ENCODE measurements at regions of chr1 and their contacts with region 1.

Region 1: GRCh38 chr1:45339789-45340570 is at the starts of genes MUTYH and TOE1:
- DNase-seq: peak; percentile 83 to 94 (median 88)
- ATAC-seq: peak; percentile 79
- H3K4me3 ChIP-seq: peak within 1 kb of the TSS; percentile 98
- H3K4me3 Mint-ChIP-seq: peak within 1 kb of the TSS; percentile 100
- H3K27ac ChIP-seq: peak within 1 kb of the TSS; percentile 98 to 100
- H3K27ac Mint-ChIP-seq: peak within 1 kb of the TSS; percentile 95
- H3K4me1 ChIP-seq: peaks cover 42% of the 10 kb centered on the region
- H3K4me1 Mint-ChIP-seq: peaks cover 58% of the 10 kb centered on the region
- H3K27me3 ChIP-seq: no peaks in the 10 kb centered on the region
- H3K27me3 Mint-ChIP-seq: no peaks in the 10 kb centered on the region
- CTCF ChIP-seq: no peak
- total RNA-seq, gene MUTYH: 57.9 to 67.4 TPM
- total RNA-seq, gene TOE1: 44.5 to 46.2 TPM

Region 2: GRCh38 chr1:44721485-44722361 is 618.3 kb before region 1 on chr1:
- CTCF ChIA-PET with region 1: no interaction called
- POLR2A ChIA-PET with region 1: interaction called, 23 read pairs
- intact Hi-C with region 1: no loop called
- DNase-seq: peak; percentile 16 to 93 (median 48)
- ATAC-seq: peak; percentile 75
- H3K4me3 ChIP-seq: peak overlapping the region; percentile 6
- H3K4me3 Mint-ChIP-seq: peak overlapping the region; percentile 84
- H3K27ac ChIP-seq: peak overlapping the region; percentile 30 to 76
- H3K27ac Mint-ChIP-seq: peak overlapping the region; percentile 90
- H3K4me1 ChIP-seq: peaks cover 77% of the 10 kb centered on the region
- H3K4me1 Mint-ChIP-seq: peaks cover 68% of the 10 kb centered on the region
- H3K27me3 ChIP-seq: no peaks in the 10 kb centered on the region
- H3K27me3 Mint-ChIP-seq: no peaks in the 10 kb centered on the region
- CTCF ChIP-seq: no peak

Region 3: DNA sequence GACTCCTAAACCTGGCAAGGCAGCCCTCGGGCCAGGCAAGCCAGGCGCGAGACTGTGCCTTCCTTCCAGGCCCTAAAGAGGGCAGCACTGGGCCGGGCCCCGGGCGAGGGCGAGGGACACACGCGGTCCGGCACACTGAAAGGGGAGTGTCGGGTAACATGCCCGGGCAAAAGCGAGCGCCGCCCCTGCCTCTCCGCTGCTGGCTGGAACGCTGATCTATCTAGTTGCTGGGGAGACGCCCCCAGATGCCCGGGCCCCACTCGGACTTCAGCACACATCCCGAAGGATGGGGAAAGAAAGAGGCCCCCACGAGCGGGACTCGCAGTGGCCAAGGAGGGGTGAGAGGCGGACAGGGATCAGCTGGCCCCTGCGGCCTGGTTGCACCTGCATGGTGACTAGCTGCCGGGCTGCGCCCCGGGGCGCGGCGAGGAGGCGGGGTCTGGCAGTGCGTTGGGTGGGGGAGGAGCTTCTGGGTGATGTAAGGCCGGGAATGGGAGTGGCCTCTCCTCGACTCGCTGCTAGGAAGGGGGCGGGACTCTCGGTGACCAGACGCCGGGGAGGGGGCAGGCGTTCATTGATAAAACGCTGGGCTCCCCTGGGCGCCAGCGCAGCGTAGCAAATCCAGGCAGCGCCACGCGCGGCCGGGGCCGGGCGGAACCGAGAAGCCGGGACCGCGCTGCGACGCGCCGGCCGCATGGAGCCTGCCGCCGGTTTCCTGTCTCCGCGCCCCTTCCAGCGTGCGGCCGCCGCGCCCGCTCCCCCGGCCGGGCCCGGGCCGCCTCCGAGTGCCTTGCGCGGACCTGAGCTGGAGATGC is 540.0 kb before region 1 on chr1 and contains the start of gene PLK3:
- CTCF ChIA-PET with region 1: no interaction called
- POLR2A ChIA-PET with region 1: interaction called, 25 read pairs
- intact Hi-C with region 1: no loop called
- DNase-seq: peak; percentile 97 to 100 (median 98)
- ATAC-seq: peak; percentile 77
- H3K4me3 ChIP-seq: peak within 1 kb of the TSS; percentile 99
- H3K4me3 Mint-ChIP-seq: peak within 1 kb of the TSS; percentile 99
- H3K27ac ChIP-seq: peak within 1 kb of the TSS; percentile 88 to 98
- H3K27ac Mint-ChIP-seq: peak within 1 kb of the TSS; percentile 86
- H3K4me1 ChIP-seq: peaks cover 48% of the 10 kb centered on the region
- H3K4me1 Mint-ChIP-seq: peaks cover 39% of the 10 kb centered on the region
- H3K27me3 ChIP-seq: no peaks in the 10 kb centered on the region
- H3K27me3 Mint-ChIP-seq: no peaks in the 10 kb centered on the region
- CTCF ChIP-seq: peak; percentile 79
- total RNA-seq, gene PLK3: 794 TPM

Region 4: GRCh38 chr1:44985747-44986359 is 354.1 kb before region 1 on chr1:
- CTCF ChIA-PET with region 1: no interaction called
- POLR2A ChIA-PET with region 1: interaction called, 12 read pairs
- intact Hi-C with region 1: no loop called
- DNase-seq: no peak
- ATAC-seq: no peak
- H3K4me3 ChIP-seq: peak overlapping the region; percentile 73
- H3K4me3 Mint-ChIP-seq: peak overlapping the region; percentile 99
- H3K27ac ChIP-seq: no peak overlapping the region
- H3K27ac Mint-ChIP-seq: peak overlapping the region; percentile 74
- H3K4me1 ChIP-seq: peaks cover 20% of the 10 kb centered on the region
- H3K4me1 Mint-ChIP-seq: peaks cover 32% of the 10 kb centered on the region
- H3K27me3 ChIP-seq: no peaks in the 10 kb centered on the region
- H3K27me3 Mint-ChIP-seq: no peaks in the 10 kb centered on the region
- CTCF ChIP-seq: no peak

Region 5: GRCh38 chr1:45326627-45327623 is 13.1 kb before region 1 on chr1 and contains the start of gene HPDL:
- CTCF ChIA-PET with region 1: interaction called, 4 read pairs
- POLR2A ChIA-PET with region 1: interaction called, 50 read pairs
- intact Hi-C with region 1: no loop called
- DNase-seq: peak; percentile 18 to 78 (median 46)
- ATAC-seq: peak; percentile 87
- H3K4me3 ChIP-seq: peak within 1 kb of the TSS; percentile 70
- H3K4me3 Mint-ChIP-seq: peak within 1 kb of the TSS; percentile 85
- H3K27ac ChIP-seq: no peak within 1 kb of the TSS
- H3K27ac Mint-ChIP-seq: no peak within 1 kb of the TSS
- H3K4me1 ChIP-seq: peaks cover 21% of the 10 kb centered on the region
- H3K4me1 Mint-ChIP-seq: peaks cover 7% of the 10 kb centered on the region
- H3K27me3 ChIP-seq: peaks cover 0 to 2% of the 10 kb centered on the region in 2 experiments
- H3K27me3 Mint-ChIP-seq: no peaks in the 10 kb centered on the region
- CTCF ChIP-seq: no peak
- total RNA-seq, gene HPDL: not detected

Region 6: DNA sequence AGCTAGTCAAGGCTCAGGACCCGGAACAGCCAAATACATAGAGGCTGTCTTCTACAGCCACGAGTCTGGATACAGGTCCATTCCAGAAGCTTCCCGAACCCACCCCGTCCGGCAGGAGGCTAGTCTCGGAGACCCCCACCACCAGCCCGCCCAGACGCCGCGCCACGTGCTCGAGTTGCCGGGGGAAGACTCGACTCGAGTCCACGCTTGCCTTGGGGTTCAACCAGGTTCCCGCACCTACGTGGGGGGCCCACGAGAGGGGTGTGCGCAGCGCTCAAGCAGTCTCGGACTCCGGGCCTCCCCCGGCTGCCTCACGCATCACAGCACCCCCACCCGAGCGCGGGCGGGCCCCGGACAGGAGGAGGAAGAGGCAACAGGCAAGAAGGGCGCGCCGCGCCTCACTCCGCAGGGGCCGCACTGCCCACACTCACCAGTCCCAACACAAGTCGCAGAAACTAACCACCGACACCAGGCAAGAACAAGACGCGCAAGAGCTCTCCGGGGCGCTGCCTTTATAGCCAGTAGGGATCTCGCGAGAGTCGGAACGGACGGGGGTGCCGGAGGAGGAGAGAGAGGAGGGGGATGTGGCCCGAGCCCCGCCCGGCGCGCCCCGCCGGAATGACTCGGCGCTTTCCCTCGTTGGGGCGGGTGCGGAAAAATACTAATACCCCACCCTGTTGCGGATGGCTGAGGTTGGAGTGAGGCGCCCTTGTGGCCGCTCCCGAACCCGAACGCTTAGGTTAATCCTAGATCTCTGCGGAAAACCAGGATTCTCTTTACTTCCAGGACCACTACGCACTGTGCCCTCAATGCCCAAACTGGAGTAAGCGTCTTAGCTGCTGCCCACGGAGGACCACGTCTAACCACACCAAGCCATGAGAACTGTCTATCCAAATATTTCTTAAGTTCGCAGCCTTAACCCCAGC is 181.7 kb after region 1 on chr1 and contains the start of gene PRDX1:
- CTCF ChIA-PET with region 1: no interaction called
- POLR2A ChIA-PET with region 1: interaction called, 36 read pairs
- intact Hi-C with region 1: no loop called
- DNase-seq: peak; percentile 93 to 97 (median 96)
- ATAC-seq: peak; percentile 90
- H3K4me3 ChIP-seq: peak within 1 kb of the TSS; percentile 90
- H3K4me3 Mint-ChIP-seq: peak within 1 kb of the TSS; percentile 97
- H3K27ac ChIP-seq: peak within 1 kb of the TSS; percentile 61 to 65
- H3K27ac Mint-ChIP-seq: peak within 1 kb of the TSS; percentile 86
- H3K4me1 ChIP-seq: peaks cover 36% of the 10 kb centered on the region
- H3K4me1 Mint-ChIP-seq: peaks cover 30% of the 10 kb centered on the region
- H3K27me3 ChIP-seq: no peaks in the 10 kb centered on the region
- H3K27me3 Mint-ChIP-seq: no peaks in the 10 kb centered on the region
- CTCF ChIP-seq: no peak
- total RNA-seq, gene PRDX1: 18.1 to 24.1 TPM

Region 7: GRCh38 chr1:45686317-45687013 is 346.5 kb after region 1 on chr1 and contains the start of gene GPBP1L1:
- CTCF ChIA-PET with region 1: no interaction called
- POLR2A ChIA-PET with region 1: interaction called, 34 read pairs
- intact Hi-C with region 1: loop called (anchors 1 to 5 kb)
- DNase-seq: peak; percentile 96 to 99 (median 98)
- ATAC-seq: peak; percentile 68
- H3K4me3 ChIP-seq: peak within 1 kb of the TSS; percentile 95
- H3K4me3 Mint-ChIP-seq: peak within 1 kb of the TSS; percentile 99
- H3K27ac ChIP-seq: peak within 1 kb of the TSS; percentile 97
- H3K27ac Mint-ChIP-seq: peak within 1 kb of the TSS; percentile 100
- H3K4me1 ChIP-seq: peaks cover 44% of the 10 kb centered on the region
- H3K4me1 Mint-ChIP-seq: peaks cover 51% of the 10 kb centered on the region
- H3K27me3 ChIP-seq: no peaks in the 10 kb centered on the region
- H3K27me3 Mint-ChIP-seq: no peaks in the 10 kb centered on the region
- CTCF ChIP-seq: no peak
- total RNA-seq, gene GPBP1L1: 116 to 125 TPM

Measured in CD4-positive, alpha-beta T cell (primary cell).